A549 (cell line): ENCODE measurements at regions of chr21 and their contacts with region 1.

Region 1: GRCh38 chr21:43728467-43729390 is 9.8 kb downstream of the PDXK start:
- DNase-seq: peak; percentile 68 to 88
- ATAC-seq: peak; percentile 77 to 78
- H3K4me3 ChIP-seq: peak overlapping the region; percentile 44
- H3K27ac ChIP-seq: peak overlapping the region; percentile 98 to 99
- H3K4me1 ChIP-seq: peaks cover 95% of the 10 kb centered on the region
- CTCF ChIP-seq: no peak
- EP300 ChIP-seq: peak; percentile 64 to 79; a peak in 3 of 5 replicates
- POLR2A ChIP-seq: no peak; the same call in 1 of the 2 replicates
- RAD21 ChIP-seq: 0 out of 5 replicates have a peak, but pooled peaks of 1 of the 2 experiments have one; percentile 22

Region 2: GRCh38 chr21:43712308-43712974 is 16.3 kb before region 1 on chr21:
- CTCF ChIA-PET with region 1: interaction called, 7 read pairs
- POLR2A ChIA-PET with region 1: interaction called, 18 read pairs
- DNase-seq: peak; percentile 77 to 98
- ATAC-seq: peak; percentile 92 to 96
- H3K4me3 ChIP-seq: peak overlapping the region; percentile 38; the same call in 1 of the 3 replicates
- H3K27ac ChIP-seq: peak overlapping the region; percentile 100
- H3K4me1 ChIP-seq: peaks cover 45% of the 10 kb centered on the region
- CTCF ChIP-seq: no peak
- EP300 ChIP-seq: peak; percentile 82 to 94; a peak in 4 of 5 replicates
- POLR2A ChIP-seq: no peak
- RAD21 ChIP-seq: no peak; a peak in 2 of 5 replicates

Region 3: DNA sequence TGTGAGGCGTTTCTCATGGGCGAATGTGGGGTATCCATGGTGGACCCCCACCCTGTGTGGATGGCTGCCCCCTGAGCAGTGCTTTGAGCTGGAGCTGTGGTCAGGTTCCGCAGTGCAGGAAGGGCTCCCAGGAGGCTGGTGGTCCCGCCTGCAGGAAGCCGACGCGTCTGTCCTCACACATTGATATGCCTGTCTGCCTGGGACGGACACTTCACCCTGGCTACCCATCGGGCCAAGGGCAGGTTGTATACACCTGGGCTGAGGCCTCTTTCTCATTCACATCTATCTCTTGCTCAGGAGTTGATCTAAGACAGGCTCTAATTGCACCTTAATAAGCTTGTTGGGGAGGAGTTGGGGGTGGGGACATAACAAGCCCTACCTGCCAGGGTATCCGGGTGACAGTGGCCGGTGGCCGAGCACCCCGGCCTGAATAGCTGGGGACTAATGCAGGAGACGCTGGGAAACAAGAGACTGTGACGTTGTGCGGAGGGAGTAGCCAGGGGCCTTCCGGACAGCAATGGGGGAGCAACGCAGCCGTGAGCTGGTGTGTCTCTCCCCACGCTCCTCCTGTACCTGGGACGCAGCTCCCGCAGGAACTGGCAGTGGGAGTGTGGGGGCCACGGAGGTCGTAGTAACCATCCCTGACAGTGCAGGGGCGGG is 11.9 kb after region 1 on chr21:
- CTCF ChIA-PET with region 1: interaction called, 15 read pairs
- POLR2A ChIA-PET with region 1: interaction called, 11 read pairs
- DNase-seq: peak; percentile 66 to 83
- ATAC-seq: peak; percentile 76 to 79
- H3K4me3 ChIP-seq: no peak overlapping the region
- H3K27ac ChIP-seq: peak overlapping the region; percentile 23 to 79
- H3K4me1 ChIP-seq: peaks cover 75% of the 10 kb centered on the region
- CTCF ChIP-seq: no peak
- EP300 ChIP-seq: no peak
- POLR2A ChIP-seq: no peak
- RAD21 ChIP-seq: 0 out of 5 replicates have a peak, but pooled peaks of 1 of the 2 experiments have one; percentile 0

Region 4: GRCh38 chr21:43751955-43752591 is 23.3 kb after region 1 on chr21:
- CTCF ChIA-PET with region 1: no interaction called
- POLR2A ChIA-PET with region 1: no interaction called
- DNase-seq: no peak
- ATAC-seq: no peak
- H3K4me3 ChIP-seq: no peak overlapping the region
- H3K27ac ChIP-seq: no peak overlapping the region
- H3K4me1 ChIP-seq: peaks cover 14% of the 10 kb centered on the region
- CTCF ChIP-seq: no peak
- EP300 ChIP-seq: no peak
- POLR2A ChIP-seq: no peak
- RAD21 ChIP-seq: no peak

Region 5: GRCh38 chr21:43893536-43894205 is 164.9 kb after region 1 on chr21:
- CTCF ChIA-PET with region 1: no interaction called
- POLR2A ChIA-PET with region 1: no interaction called
- DNase-seq: no peak
- ATAC-seq: no peak
- H3K4me3 ChIP-seq: no peak overlapping the region
- H3K27ac ChIP-seq: no peak overlapping the region
- H3K4me1 ChIP-seq: no peaks in the 10 kb centered on the region
- CTCF ChIP-seq: no peak
- EP300 ChIP-seq: no peak
- POLR2A ChIP-seq: no peak
- RAD21 ChIP-seq: no peak